ENCODE measurements at regions of chr17 and their contacts with region 1.

Region 1: GRCh38 chr17:5249615-5250014 is 15.0 kb upstream of the SCIMP start:
- DNase-seq: peak; percentile 70
- H3K4me3 ChIP-seq: no peak overlapping the region
- H3K27ac ChIP-seq: no peak overlapping the region
- H3K4me1 ChIP-seq: no peaks in the 10 kb centered on the region
- H3K27me3 ChIP-seq: no peaks in the 10 kb centered on the region
- CTCF ChIP-seq: peak; percentile 64 to 69

Region 2: GRCh38 chr17:5184288-5184687 is 65.3 kb before region 1 on chr17:
- CTCF ChIA-PET with region 1: no interaction called
- dilution Hi-C with region 1: no loop called
- in situ Hi-C with region 1: no loop called
- intact Hi-C with region 1: no loop called
- DNase-seq: no peak
- H3K4me3 ChIP-seq: no peak overlapping the region
- H3K27ac ChIP-seq: no peak overlapping the region
- H3K4me1 ChIP-seq: no peaks in the 10 kb centered on the region
- H3K27me3 ChIP-seq: no peaks in the 10 kb centered on the region
- CTCF ChIP-seq: no peak

Region 3: DNA sequence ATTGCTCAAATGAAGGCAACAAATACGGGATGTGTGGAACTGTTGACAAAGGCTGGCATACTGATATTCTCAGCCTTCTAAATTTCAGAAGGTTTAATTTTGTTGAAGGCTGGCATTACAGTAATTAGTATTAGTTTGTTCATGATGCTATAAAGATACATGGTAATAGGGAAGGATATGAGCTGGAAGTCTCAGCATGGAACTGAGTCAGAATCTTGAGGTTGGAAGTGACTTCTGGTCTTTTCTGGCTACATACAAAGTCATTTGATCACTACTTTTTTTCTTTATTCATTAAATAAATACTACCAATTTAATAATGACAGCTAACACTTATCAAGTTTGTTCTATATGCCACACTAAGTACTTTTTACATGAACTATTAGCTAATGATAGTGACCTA is 55.0 kb after region 1 on chr17:
- CTCF ChIA-PET with region 1: no interaction called
- dilution Hi-C with region 1: no loop called
- in situ Hi-C with region 1: no loop called
- intact Hi-C with region 1: loop called (anchors 1 kb)
- DNase-seq: no peak
- H3K4me3 ChIP-seq: no peak overlapping the region
- H3K27ac ChIP-seq: no peak overlapping the region
- H3K4me1 ChIP-seq: no peaks in the 10 kb centered on the region
- H3K27me3 ChIP-seq: no peaks in the 10 kb centered on the region
- CTCF ChIP-seq: no peak

Region 4: DNA sequence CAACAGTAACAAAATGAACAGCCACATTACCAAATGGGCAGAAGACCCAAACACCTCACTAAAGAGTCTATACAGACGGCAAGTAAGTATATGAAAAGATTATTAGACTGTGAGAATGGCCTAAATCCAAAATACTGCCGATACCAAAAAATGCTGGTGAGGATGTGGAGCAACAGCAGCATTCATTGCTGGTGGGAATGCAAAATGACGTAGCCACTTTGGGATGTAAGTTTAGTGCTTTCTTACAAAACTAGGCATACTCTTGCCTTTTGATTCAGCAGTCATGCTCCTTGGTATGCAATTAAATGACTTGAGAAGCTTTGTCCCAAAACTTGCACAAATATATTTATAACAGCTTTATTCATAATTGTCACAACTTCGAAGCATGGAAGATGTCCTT is 76.2 kb after region 1 on chr17:
- CTCF ChIA-PET with region 1: no interaction called
- dilution Hi-C with region 1: no loop called
- in situ Hi-C with region 1: no loop called
- intact Hi-C with region 1: no loop called
- DNase-seq: no peak
- H3K4me3 ChIP-seq: no peak overlapping the region
- H3K27ac ChIP-seq: no peak overlapping the region
- H3K4me1 ChIP-seq: no peaks in the 10 kb centered on the region
- H3K27me3 ChIP-seq: no peaks in the 10 kb centered on the region
- CTCF ChIP-seq: no peak

Region 5: DNA sequence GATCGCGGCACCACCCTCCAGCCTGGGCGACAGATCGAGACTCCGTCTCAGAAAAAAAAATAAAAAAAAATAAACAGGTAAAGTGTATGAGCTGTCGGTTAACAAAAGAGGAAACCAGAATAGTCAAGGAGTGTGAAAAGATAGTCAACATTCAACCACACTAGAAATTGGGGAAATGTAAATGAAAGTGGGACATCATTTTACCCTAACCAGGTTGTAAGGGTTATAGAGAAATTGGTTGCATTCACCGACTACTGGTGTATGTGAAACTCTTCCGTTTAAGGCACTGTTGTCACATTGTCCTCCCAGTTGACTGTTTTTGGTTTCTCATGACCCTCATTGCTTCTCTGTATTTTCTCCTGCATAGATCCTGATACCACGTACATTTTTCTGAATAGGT is 95.3 kb after region 1 on chr17:
- CTCF ChIA-PET with region 1: no interaction called
- dilution Hi-C with region 1: no loop called
- in situ Hi-C with region 1: no loop called
- intact Hi-C with region 1: loop called (anchors 10 kb)
- DNase-seq: no peak
- H3K4me3 ChIP-seq: no peak overlapping the region
- H3K27ac ChIP-seq: no peak overlapping the region
- H3K4me1 ChIP-seq: no peaks in the 10 kb centered on the region
- H3K27me3 ChIP-seq: no peaks in the 10 kb centered on the region
- CTCF ChIP-seq: no peak

Region 6: DNA sequence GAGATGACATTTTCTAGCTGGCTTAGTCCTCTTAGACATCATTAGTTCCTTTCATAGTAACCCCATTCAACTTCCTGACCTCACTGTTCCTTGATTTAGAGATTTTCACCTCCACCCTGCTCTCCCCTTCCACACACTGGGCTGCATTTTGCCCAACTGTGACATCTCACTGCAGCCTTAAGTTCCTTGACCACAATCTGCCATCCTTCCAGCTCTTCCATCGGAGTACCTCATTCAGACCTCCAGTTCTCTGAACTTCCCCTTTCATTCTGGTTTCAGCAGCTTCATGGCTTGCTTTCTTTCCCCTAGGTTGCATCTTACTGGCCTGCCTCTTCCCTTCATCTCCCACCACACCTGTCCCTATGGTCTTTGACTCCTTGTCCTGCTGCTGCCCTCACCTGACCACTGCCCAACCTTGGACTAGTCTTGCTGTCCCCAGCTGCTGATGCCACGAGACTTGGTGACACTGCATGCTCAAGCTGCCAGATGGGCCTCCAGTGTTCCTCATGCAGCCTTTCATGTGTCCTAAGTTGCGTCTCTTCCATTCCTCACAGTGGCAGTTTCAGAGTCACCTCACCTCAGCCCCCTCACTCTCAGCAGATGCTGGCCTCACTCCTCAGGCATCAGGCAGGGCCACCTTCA is 129.1 kb after region 1 on chr17:
- CTCF ChIA-PET with region 1: no interaction called
- dilution Hi-C with region 1: no loop called
- in situ Hi-C with region 1: no loop called
- intact Hi-C with region 1: loop called (anchors 2 kb)
- DNase-seq: no peak
- H3K4me3 ChIP-seq: no peak overlapping the region
- H3K27ac ChIP-seq: no peak overlapping the region
- H3K4me1 ChIP-seq: no peaks in the 10 kb centered on the region
- H3K27me3 ChIP-seq: no peaks in the 10 kb centered on the region
- CTCF ChIP-seq: no peak

Region 7: GRCh38 chr17:5413682-5414081 is 164.1 kb after region 1 on chr17:
- CTCF ChIA-PET with region 1: no interaction called
- dilution Hi-C with region 1: no loop called
- in situ Hi-C with region 1: no loop called
- intact Hi-C with region 1: loop called (anchors 1 kb)
- DNase-seq: peak; percentile 93
- H3K4me3 ChIP-seq: no peak overlapping the region
- H3K27ac ChIP-seq: peak overlapping the region; percentile 61
- H3K4me1 ChIP-seq: peaks cover 20% of the 10 kb centered on the region
- H3K27me3 ChIP-seq: no peaks in the 10 kb centered on the region
- CTCF ChIP-seq: no peak

Region 8: DNA sequence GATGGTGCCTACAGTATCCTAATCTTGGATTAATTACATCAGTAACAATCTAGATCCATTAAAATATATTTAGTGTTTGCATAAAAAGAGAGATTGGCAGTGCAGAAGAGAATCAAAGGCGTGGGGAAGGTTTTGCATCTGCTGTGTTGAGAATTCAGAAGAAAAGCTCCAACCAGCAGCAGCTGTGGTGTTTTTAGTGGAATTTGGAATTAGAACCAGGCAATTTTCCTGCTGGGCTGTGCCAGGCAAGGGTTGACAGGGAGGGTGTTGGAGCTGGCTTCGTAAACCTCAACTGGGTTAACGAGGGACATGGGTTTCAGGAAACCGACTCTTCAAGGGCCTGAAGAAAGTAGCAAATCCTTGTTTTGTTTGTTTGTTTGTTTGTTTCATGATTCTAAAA is 712.8 kb after region 1 on chr17:
- CTCF ChIA-PET with region 1: no interaction called
- dilution Hi-C with region 1: no loop called
- in situ Hi-C with region 1: no loop called
- intact Hi-C with region 1: no loop called
- DNase-seq: no peak
- H3K4me3 ChIP-seq: no peak overlapping the region
- H3K27ac ChIP-seq: no peak overlapping the region
- H3K4me1 ChIP-seq: no peaks in the 10 kb centered on the region
- H3K27me3 ChIP-seq: no peaks in the 10 kb centered on the region
- CTCF ChIP-seq: no peak